ENCODE measurements at regions of chr2 and their contacts with region 1.

Region 1: GRCh38 chr2:207166039-207166348 is 246 bp upstream of the KLF7 start:
- DNase-seq: peak; percentile 99
- ATAC-seq: peak; percentile 79 to 84
- H3K4me3 ChIP-seq: peak overlapping the region; percentile 71 to 90 (median 78)
- H3K27ac ChIP-seq: peak overlapping the region; percentile 97 to 100 (median 100)
- H3K4me1 ChIP-seq: peaks cover 17 to 37% of the 10 kb centered on the region in 2 donors
- H3K27me3 ChIP-seq: peaks cover 0 to 9% (median 0%) of the 10 kb centered on the region in 3 donors
- CTCF ChIP-seq: no peak
- POLR2A ChIP-seq: no peak

Region 2: DNA sequence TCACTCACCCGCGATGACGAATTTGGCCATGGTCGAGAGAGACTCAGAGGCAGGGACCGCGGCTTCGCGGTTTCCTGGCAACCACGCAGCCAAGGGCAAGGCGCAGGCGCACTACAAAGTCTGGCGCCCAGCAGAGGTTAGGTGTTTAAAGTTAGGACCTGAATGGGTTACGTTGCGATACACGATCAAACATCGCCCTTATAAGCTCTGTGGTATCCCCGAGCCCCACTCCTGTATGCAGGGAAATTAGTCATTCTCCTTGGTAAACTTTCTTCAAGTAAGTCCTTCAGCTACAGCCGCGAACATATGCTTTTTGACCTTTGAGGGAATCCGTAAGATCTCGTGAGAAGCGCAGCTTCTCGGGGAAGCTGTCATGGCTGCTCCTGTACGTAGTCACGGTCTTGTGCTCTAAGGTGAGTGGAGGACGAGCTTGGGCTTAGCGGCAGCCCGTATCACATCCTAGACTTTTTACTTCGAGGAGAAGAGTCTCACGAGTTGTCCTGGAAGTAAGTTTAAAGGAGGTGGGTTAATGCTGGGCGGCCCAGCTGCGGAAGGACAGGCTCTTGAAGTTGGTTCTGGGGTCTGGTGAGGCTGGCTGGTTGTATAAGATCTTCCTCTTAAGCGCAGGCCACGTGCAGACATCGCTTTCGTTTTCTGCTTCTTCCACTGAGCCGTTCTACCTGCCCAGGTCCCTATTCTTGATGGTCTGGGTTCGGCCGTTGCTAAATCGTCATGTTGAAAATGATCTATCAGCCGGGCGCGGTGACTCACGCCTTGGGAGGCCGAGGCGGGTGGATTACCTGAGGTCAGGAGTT is 400.5 kb before region 1 on chr2 and contains the starts of genes FASTKD2 and MDH1B:
- in situ Hi-C with region 1: no loop called
- intact Hi-C with region 1: loop called (anchors 5 kb)
- DNase-seq: peak; percentile 83 to 90
- ATAC-seq: peak; percentile 99
- H3K4me3 ChIP-seq: peak within 1 kb of the TSS; percentile 58 to 96 (median 81)
- H3K27ac ChIP-seq: peak within 1 kb of the TSS; percentile 83 to 96 (median 92)
- H3K4me1 ChIP-seq: peaks cover 30 to 43% of the 10 kb centered on the region in 2 donors
- H3K27me3 ChIP-seq: no peaks in the 10 kb centered on the region
- CTCF ChIP-seq: peak in 1 of 5 experiments; percentile 12
- POLR2A ChIP-seq: peak; percentile 57 to 77
- total RNA-seq, gene FASTKD2: 42.9 to 68.6 (median 54.9) TPM
- total RNA-seq, gene MDH1B: 0.13 to 1.6 (median 0.49) TPM

Region 3: DNA sequence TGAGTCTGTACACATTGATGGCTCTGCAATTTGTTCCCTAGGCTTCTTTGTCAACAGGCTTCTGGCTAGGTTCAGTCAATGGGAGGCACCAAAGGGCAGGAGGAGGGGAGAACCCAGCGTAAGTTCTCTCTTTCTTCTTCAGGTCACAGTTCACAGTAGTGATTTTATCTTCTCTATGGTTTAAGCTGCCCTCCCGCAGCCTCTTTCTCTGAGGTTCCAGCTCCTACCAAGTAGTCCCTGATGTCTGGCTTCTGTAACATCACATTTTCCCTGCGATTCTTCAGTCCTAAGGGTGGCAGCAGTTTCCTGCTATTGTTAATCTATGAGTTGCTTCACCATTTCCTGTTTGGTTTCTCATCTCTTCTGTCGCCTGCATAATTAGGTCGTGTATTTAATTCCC is 119.3 kb before region 1 on chr2:
- in situ Hi-C with region 1: no loop called
- intact Hi-C with region 1: loop called (anchors 5 kb)
- DNase-seq: no peak
- ATAC-seq: peak in 1 of 2 donors; percentile 41
- H3K4me3 ChIP-seq: no peak overlapping the region
- H3K27ac ChIP-seq: no peak overlapping the region
- H3K4me1 ChIP-seq: peaks cover 0 to 5% of the 10 kb centered on the region in 2 donors
- H3K27me3 ChIP-seq: no peaks in the 10 kb centered on the region
- CTCF ChIP-seq: no peak
- POLR2A ChIP-seq: no peak

Region 4: GRCh38 chr2:207133820-207134519 is 32.0 kb before region 1 on chr2:
- in situ Hi-C with region 1: no loop called
- intact Hi-C with region 1: loop called (anchors 5 kb)
- DNase-seq: peak; percentile 75 to 76
- ATAC-seq: peak; percentile 87 to 94
- H3K4me3 ChIP-seq: no peak overlapping the region
- H3K27ac ChIP-seq: peak overlapping the region; percentile 79 to 86 (median 81)
- H3K4me1 ChIP-seq: peaks cover 71 to 73% of the 10 kb centered on the region in 2 donors
- H3K27me3 ChIP-seq: no peaks in the 10 kb centered on the region
- CTCF ChIP-seq: no peak
- POLR2A ChIP-seq: no peak

Region 5: DNA sequence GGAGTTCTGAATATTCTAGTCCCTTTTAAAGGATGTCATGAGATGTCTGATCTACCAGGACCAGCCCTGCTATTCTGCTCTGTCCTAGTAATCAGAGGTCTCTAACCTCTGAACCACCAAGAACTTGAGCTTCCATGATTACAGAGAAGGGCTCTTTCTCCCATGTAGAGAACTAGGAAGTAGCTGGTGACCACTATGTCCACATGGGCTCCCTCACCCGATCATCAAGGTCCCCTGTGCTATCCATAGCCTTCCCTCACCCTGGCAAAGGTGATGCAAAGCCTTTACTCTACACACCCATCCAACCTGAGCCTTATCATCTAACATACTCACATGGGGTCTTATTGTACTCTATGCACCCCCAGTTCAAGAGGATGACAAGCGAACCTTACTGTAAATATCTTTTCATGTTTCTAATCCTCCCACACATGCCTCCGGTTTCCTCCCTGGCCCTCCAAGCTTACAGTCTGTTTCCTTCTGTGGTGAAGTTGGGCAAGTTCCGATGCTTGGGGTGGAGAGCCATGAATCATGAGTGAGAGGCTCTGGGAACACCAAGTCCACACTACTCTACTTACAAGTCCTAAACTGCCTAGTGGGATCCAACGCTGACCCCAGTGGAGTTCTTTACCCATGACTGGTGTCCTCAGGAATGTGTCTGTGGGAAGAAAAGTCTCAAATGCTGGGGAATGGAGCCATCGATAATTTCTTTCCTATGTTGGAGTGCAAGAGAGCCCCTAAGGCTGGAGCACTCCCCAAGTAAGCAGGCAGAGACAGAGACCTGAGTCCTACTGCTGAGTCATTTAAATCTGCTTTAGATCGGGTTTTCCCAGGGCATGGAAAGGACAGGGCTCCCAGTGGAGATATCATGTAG is 73.1 kb after region 1 on chr2:
- in situ Hi-C with region 1: no loop called
- intact Hi-C with region 1: loop called (anchors 2 kb)
- DNase-seq: peak; percentile 62 to 77
- ATAC-seq: peak; percentile 87 to 93
- H3K4me3 ChIP-seq: no peak overlapping the region
- H3K27ac ChIP-seq: peak overlapping the region in 3 of 4 donors; percentile 22 to 58 (median 48)
- H3K4me1 ChIP-seq: peaks cover 0 to 10% of the 10 kb centered on the region in 2 donors
- H3K27me3 ChIP-seq: no peaks in the 10 kb centered on the region
- CTCF ChIP-seq: no peak
- POLR2A ChIP-seq: no peak

Region 6: GRCh38 chr2:207473049-207473930 is 307.3 kb after region 1 on chr2:
- in situ Hi-C with region 1: no loop called
- intact Hi-C with region 1: loop called (anchors 5 kb)
- DNase-seq: no peak
- ATAC-seq: peak; percentile 21 to 36
- H3K4me3 ChIP-seq: no peak overlapping the region
- H3K27ac ChIP-seq: no peak overlapping the region
- H3K4me1 ChIP-seq: peaks cover 4 to 9% of the 10 kb centered on the region in 2 donors
- H3K27me3 ChIP-seq: no peaks in the 10 kb centered on the region
- CTCF ChIP-seq: peak; percentile 9 to 51 (median 35)
- POLR2A ChIP-seq: no peak

Measured in gastrocnemius medialis (tissue), 4 donors.